ENCODE measurements at regions of chr11 and their contacts with region 1.

Region 1: DNA sequence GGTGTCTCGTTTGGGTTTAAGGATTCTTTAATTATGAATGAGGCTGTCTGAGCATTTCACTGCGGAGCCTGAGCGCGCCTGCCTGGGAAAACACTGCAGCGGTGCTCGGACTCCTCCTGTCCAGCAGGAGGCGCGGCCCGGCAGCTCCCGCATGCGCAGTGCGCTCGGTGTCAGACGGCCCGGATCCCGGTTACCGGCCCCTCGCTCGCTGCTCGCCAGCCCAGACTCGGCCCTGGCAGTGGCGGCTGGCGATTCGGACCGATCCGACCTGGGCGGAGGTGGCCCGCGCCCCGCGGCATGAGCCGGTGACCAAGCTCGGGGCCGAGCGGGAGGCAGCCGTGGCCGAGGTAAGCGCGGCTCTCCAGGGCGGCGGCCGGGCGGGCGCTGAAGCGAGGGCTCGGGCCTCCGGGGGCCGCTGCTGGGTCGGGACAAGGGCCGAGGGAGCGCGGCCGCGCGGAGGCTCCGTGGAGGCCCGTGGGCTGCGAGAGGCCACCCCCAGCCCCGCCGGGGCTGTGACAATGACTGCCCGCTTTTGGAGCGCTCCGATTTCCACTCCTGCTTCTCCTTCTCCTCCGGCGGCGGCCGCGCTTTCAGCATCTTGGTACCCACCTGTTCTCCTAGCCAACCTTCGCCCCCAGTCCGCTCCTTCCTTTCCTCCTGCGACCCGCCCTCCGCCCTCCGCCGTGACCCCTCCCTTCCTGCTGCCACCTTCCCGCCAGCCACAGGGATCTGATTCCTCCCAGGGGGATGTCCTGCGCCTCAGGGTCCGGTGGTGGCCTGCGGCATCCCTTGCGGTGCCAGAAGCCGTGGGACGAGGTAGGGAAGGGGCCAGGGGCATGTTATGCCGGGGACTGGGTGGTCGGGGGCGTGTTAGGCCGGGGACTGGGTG is at the start of gene EXT2:
- DNase-seq: peak; percentile 79 to 85 (median 83)
- H3K4me3 ChIP-seq: peak within 1 kb of the TSS; percentile 61 to 70
- H3K4me3 Mint-ChIP-seq: peak within 1 kb of the TSS; percentile 87 to 92 (median 90)
- H3K27ac ChIP-seq: peak within 1 kb of the TSS; percentile 58
- H3K27ac Mint-ChIP-seq: peak within 1 kb of the TSS; percentile 68 to 90 (median 85)
- H3K4me1 ChIP-seq: peaks cover 29% of the 10 kb centered on the region
- H3K4me1 Mint-ChIP-seq: peaks cover 25 to 50% (median 35%) of the 10 kb centered on the region in 4 donors
- H3K27me3 ChIP-seq: no peaks in the 10 kb centered on the region
- H3K27me3 Mint-ChIP-seq: no peaks in the 10 kb centered on the region
- total RNA-seq, gene EXT2: 28.2 to 30.3 TPM

Region 2: DNA sequence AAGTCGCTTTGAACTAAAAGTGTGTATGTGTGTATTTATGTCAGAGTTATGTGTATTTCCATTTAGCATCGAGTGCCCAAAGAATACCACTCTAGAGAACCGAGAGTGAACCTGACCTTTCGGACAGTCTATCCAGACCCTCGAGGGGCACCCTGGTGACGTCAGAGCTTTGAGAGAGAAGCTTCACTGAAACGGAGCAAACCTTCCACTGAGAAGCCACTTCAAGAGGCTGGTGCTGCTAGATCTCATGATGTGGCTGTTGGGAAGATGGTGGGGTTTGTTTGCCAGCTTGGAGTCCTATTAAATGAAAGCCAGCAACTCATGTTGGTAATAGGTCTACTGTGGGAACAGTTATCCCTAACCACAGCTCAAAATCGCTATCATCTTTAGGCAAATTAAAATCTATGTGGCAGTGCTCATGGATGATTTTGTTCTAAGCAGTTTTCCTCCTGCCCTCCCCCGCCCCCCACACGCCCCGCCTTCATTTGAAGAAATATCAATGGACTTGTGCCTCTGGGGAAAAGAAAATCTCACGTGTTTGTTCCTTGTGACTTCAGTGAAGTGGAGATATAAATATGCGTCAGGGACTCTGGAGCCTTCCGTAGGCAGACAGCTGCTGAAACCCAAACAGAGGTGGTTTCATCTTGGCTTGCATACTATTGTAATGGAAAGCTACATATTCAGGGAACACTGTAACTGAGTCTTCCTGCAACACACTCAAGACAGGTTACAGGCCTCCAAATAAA is 175.7 kb before region 1 on chr11:
- CTCF ChIA-PET with region 1: no interaction called
- POLR2A ChIA-PET with region 1: no interaction called
- intact Hi-C with region 1: no loop called
- DNase-seq: no peak
- H3K4me3 ChIP-seq: no peak overlapping the region
- H3K4me3 Mint-ChIP-seq: no peak overlapping the region
- H3K27ac ChIP-seq: no peak overlapping the region
- H3K27ac Mint-ChIP-seq: peak overlapping the region in 1 of 7 donors; percentile 8
- H3K4me1 ChIP-seq: no peaks in the 10 kb centered on the region
- H3K4me1 Mint-ChIP-seq: peaks cover 0 to 6% (median 1%) of the 10 kb centered on the region in 4 donors
- H3K27me3 ChIP-seq: no peaks in the 10 kb centered on the region
- H3K27me3 Mint-ChIP-seq: no peaks in the 10 kb centered on the region

Region 3: GRCh38 chr11:44065841-44066731 is 29.7 kb before region 1 on chr11 and contains the start of gene ACCS:
- CTCF ChIA-PET with region 1: interaction called, 80 read pairs
- POLR2A ChIA-PET with region 1: interaction called, 9 read pairs
- intact Hi-C with region 1: loop called (anchors 1 kb)
- DNase-seq: peak; percentile 87 to 93 (median 89)
- H3K4me3 ChIP-seq: peak within 1 kb of the TSS; percentile 79 to 86
- H3K4me3 Mint-ChIP-seq: peak within 1 kb of the TSS; percentile 89 to 98 (median 94)
- H3K27ac ChIP-seq: peak within 1 kb of the TSS; percentile 63
- H3K27ac Mint-ChIP-seq: peak within 1 kb of the TSS; percentile 91 to 95 (median 94)
- H3K4me1 ChIP-seq: peaks cover 17% of the 10 kb centered on the region
- H3K4me1 Mint-ChIP-seq: peaks cover 5 to 54% (median 31%) of the 10 kb centered on the region in 4 donors
- H3K27me3 ChIP-seq: no peaks in the 10 kb centered on the region
- H3K27me3 Mint-ChIP-seq: no peaks in the 10 kb centered on the region
- total RNA-seq, gene ACCS: 74.9 to 78.9 TPM

Region 4: DNA sequence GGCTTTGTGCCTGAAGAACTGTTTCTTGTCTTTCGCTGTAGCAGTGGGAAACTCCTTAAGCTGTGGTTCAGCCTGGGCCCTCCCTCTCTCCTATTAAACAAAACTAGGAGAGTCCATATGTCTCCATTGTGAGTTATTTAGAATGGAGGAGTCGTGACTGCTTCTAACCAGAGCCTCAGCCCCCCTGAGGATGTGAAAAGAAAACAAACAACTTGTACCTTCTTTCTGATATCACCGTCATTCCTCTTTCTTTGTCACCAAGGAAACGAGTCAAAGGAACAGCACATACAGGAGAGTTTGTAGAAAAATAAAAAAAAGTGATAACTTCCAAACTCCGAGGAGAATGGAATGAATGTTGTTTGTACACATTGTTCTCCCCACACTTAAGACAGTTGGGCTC is 11.8 kb before region 1 on chr11:
- CTCF ChIA-PET with region 1: interaction called, 135 read pairs
- POLR2A ChIA-PET with region 1: no interaction called
- intact Hi-C with region 1: no loop called
- DNase-seq: no peak
- H3K4me3 ChIP-seq: no peak overlapping the region
- H3K4me3 Mint-ChIP-seq: no peak overlapping the region
- H3K27ac ChIP-seq: no peak overlapping the region
- H3K27ac Mint-ChIP-seq: no peak overlapping the region
- H3K4me1 ChIP-seq: no peaks in the 10 kb centered on the region
- H3K4me1 Mint-ChIP-seq: no peaks in the 10 kb centered on the region
- H3K27me3 ChIP-seq: no peaks in the 10 kb centered on the region
- H3K27me3 Mint-ChIP-seq: no peaks in the 10 kb centered on the region

Region 5: GRCh38 chr11:44110231-44110679 is 14.5 kb after region 1 on chr11:
- CTCF ChIA-PET with region 1: interaction called, 135 read pairs
- POLR2A ChIA-PET with region 1: interaction called, 3 read pairs
- intact Hi-C with region 1: no loop called
- DNase-seq: peak; percentile 31 to 44 (median 39)
- H3K4me3 ChIP-seq: no peak overlapping the region
- H3K4me3 Mint-ChIP-seq: no peak overlapping the region
- H3K27ac ChIP-seq: no peak overlapping the region
- H3K27ac Mint-ChIP-seq: peak overlapping the region in 5 of 7 donors; percentile 65 to 89 (median 87)
- H3K4me1 ChIP-seq: peaks cover 4% of the 10 kb centered on the region
- H3K4me1 Mint-ChIP-seq: peaks cover 6 to 8% (median 7%) of the 10 kb centered on the region in 4 donors
- H3K27me3 ChIP-seq: no peaks in the 10 kb centered on the region
- H3K27me3 Mint-ChIP-seq: no peaks in the 10 kb centered on the region